Breast epithelium (tissue), 4 donors: ENCODE measurements at regions of chr19 and their contacts with region 1.

Region 1: DNA sequence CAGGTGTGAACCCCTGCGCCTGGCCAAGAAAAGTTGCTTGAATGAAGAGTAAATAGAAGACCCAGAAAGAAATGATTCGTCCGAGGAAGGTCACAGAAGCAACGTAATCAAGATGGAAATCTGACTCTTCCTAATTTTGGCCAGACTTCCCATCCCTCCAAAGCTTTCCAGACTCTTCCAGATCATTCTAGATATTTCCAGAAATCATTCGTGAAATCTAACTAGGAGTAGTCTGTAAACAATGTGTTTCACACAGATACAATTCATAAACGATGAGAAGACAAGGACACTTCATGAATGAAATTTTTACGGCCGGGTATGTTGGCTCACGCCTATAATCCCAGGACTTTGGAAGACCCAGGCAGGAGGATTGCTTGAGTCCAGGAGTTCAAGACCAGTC is 9.3 kb upstream of the LDLR start:
- DNase-seq: no peak
- H3K4me3 ChIP-seq: no peak overlapping the region
- H3K27ac ChIP-seq: no peak overlapping the region
- H3K4me1 ChIP-seq: peaks cover 0 to 4% of the 10 kb centered on the region in 2 donors
- H3K27me3 ChIP-seq: no peaks in the 10 kb centered on the region
- CTCF ChIP-seq: no peak
- POLR2A ChIP-seq: no peak

Region 2: DNA sequence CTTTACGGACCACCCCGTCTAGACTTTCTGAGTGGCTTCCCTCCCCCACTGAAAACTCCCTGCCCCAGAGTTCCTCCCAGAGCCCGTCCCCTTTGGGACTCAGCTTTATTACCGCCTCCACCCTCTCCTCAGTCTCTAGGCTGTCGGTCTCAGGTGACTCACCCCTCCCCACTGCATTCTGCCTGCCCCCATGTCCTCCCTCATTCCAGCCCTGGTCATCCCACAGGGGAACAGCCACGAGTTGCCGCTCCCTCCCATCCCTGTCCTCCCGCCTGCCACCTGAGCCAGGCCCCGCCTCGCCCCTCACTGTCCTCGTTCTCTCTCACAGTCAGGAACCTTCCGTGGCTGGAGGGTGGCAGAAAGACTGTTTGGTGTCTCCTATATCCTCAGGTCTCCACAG is 61.8 kb before region 1 on chr19:
- intact Hi-C with region 1: no loop called
- DNase-seq: peak in 1 of 2 donors; percentile 67
- H3K4me3 ChIP-seq: peak overlapping the region in 1 of 3 donors; percentile 22
- H3K27ac ChIP-seq: peak overlapping the region; percentile 90 to 92
- H3K4me1 ChIP-seq: peaks cover 0 to 13% of the 10 kb centered on the region in 2 donors
- H3K27me3 ChIP-seq: no peaks in the 10 kb centered on the region
- CTCF ChIP-seq: no peak
- POLR2A ChIP-seq: no peak

Region 3: GRCh38 chr19:11633223-11633622 is 553.2 kb after region 1 on chr19:
- intact Hi-C with region 1: loop called (anchors 5 kb)
- DNase-seq: no peak
- H3K4me3 ChIP-seq: no peak overlapping the region
- H3K27ac ChIP-seq: no peak overlapping the region
- H3K4me1 ChIP-seq: no peaks in the 10 kb centered on the region
- H3K27me3 ChIP-seq: no peaks in the 10 kb centered on the region
- CTCF ChIP-seq: no peak
- POLR2A ChIP-seq: no peak